ENCODE measurements at regions of chr4 and their contacts with region 1.

Region 1: DNA sequence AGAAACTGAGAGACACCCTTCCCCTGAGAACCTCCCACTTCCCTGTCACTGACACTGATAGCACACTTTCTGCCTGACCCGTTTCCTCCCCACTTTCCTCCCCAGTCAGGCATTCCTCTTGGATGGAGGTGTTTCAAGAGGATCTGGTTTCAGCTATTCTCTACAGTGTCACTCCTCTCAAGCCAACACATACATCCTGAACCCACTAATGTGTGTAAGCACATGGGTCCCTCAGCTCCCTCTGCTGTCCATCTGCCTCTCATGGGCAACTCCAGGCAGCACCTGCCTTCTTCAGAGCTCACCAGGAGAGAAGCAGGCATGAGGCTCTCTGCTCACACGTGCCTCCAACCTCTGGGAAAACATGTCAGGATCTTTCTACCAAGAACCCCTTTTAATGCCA is 207.6 kb downstream of the NAF1 start:
- DNase-seq: no peak

Region 2: GRCh38 chr4:162645381-162645780 is 313.7 kb before region 1 on chr4:
- intact Hi-C with region 1: loop called (anchors 10 kb)
- DNase-seq: no peak

Region 3: GRCh38 chr4:163121689-163122088 is 162.6 kb after region 1 on chr4:
- intact Hi-C with region 1: no loop called
- DNase-seq: no peak

Region 4: DNA sequence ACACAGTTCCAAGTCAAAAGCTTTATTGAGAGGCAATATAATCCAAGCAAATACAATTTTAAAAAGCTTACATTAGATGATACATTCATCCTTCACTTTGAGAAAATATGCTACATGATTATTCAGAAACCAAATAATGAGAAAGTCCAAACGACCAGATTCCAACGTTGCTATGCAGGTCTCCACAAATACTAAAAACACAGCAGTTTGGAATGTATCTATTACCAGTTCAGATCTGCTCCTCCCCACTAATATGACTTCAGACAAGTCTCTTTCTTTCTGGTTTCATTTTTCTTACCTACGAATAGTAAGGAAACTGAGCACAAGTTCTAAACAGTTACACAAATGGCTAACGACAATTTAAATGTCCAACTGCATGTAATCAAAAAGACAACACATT is 198.1 kb after region 1 on chr4:
- intact Hi-C with region 1: no loop called
- DNase-seq: no peak